HAP-1 (cell line): ENCODE measurements at regions of chrX and their contacts with region 1.

Region 1: GRCh38 chrX:120090208-120090607 is 12.7 kb upstream of the RHOXF2B start:
- DNase-seq: peak; percentile 52 to 74
- H3K4me3 ChIP-seq: no peak overlapping the region
- H3K4me1 ChIP-seq: peaks cover 8% of the 10 kb centered on the region
- H3K27me3 ChIP-seq: no peaks in the 10 kb centered on the region

Region 2: DNA sequence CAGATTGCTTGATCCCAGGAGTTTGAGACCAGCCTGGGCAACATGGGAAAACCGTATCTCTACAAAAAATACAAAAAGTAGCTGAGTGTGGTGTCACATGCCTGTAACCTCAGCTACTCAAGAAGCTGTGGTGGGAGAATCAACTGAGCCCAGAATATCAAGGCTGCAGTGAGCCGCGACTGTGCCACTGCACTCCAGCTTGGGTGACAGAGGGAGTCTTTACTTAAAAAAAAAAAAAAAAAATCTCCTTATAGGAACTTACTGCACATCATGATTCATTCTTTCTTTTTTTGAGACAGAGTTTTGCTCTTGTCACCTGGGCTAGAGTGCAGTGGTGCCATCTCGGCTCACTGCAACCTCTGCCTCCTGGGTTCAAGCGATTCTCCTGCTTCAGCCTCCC is 261.8 kb before region 1 on chrX:
- in situ Hi-C with region 1: no loop called
- DNase-seq: no peak
- H3K4me3 ChIP-seq: no peak overlapping the region
- H3K4me1 ChIP-seq: no peaks in the 10 kb centered on the region
- H3K27me3 ChIP-seq: no peaks in the 10 kb centered on the region

Region 3: DNA sequence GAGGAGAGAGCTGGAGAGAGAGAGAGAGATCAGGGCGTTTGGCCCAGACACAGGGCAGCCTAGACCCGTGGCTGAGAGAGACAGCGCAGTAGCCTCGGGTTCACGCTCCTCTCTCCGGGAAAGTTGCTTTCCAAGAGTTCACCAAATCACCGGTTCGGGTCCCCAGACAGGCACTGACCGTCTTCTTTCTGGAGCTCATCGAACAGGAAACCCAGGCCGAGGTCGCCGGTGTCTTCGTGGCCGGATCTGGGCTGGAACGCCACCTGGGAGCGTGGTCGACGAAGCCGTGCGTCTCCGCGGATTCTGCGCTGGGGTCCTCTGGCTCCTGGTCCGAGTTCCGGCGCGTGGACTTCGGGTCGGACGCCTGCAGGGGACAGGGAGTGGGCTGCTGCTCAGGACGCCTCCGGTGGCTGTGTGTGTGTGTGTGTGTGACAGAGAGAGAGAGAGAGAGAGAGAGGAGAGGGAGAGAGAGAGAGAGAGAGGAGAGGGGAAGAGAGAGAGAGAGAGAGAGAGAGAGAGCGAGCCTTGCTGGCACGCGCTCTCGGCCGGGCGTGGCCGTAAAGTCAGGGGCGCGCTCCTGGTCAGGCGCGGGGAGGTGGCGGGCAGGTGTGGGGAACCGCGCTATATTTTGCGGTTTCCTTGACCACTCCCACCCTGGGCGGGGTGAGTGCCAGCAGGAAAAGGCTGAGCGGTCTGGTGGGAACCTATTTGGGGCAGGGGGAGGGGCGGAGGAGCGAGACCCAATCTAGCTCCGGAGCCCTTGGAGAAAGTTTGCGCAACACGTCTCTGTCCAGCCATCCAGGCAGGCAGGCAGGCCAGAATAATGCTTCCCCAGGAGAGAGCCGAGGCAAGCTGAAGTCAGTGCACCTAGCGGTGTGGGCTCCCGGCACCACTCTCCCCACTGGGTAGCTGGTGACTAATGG is 74.8 kb before region 1 on chrX:
- in situ Hi-C with region 1: loop called (anchors 10 kb)
- DNase-seq: peak; percentile 37 to 84
- H3K4me3 ChIP-seq: peak overlapping the region; percentile 42
- H3K4me1 ChIP-seq: peaks cover 15% of the 10 kb centered on the region
- H3K27me3 ChIP-seq: no peaks in the 10 kb centered on the region; the same call in 1 of the 2 replicates

Region 4: DNA sequence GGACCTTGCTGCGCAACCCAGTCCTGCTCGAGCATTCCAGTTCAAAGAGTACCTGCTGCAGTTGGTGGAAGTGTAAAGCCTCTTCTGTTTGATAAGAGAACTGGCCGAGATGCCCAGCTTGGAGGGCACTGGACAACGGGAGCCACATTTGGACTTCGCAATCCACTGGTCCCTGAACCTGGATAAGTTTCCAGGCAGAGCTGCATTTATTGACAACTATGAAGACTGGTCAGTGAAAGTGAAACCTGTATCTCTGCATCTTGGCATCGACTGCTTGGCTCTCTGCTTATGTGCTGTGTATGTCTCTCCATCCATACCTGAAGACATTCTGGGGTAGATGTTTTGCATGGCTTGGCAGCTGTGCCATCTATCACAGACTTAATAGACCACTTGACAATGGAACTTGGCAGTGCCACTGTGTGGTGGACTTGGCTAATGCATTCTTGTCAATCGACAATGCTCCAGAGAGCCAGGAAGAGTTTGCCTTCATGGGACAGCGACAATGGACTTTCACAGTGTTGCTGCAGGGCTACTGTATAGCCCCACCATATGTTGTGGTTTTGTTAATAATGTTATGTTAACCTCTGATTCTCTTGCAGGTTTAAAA is 116.9 kb after region 1 on chrX:
- in situ Hi-C with region 1: loop called (anchors 10 kb)
- DNase-seq: no peak
- H3K4me3 ChIP-seq: no peak overlapping the region
- H3K4me1 ChIP-seq: no peaks in the 10 kb centered on the region
- H3K27me3 ChIP-seq: no peaks in the 10 kb centered on the region